HAP-1 (cell line): ENCODE measurements at regions of chr3 and their contacts with region 1.

Region 1: GRCh38 chr3:88203642-88204055 is 53.9 kb downstream of the C3orf38 start:
- DNase-seq: peak; percentile 51 to 84
- H3K4me3 ChIP-seq: no peak overlapping the region
- H3K4me1 ChIP-seq: no peaks in the 10 kb centered on the region
- H3K27me3 ChIP-seq: no peaks in the 10 kb centered on the region

Region 2: GRCh38 chr3:89107461-89108290 is 904.0 kb after region 1 on chr3 and contains the start of gene EPHA3:
- in situ Hi-C with region 1: loop called (anchors 25 kb)
- DNase-seq: peak; percentile 84 to 92
- H3K4me3 ChIP-seq: peak within 1 kb of the TSS; percentile 45
- H3K4me1 ChIP-seq: peaks cover 37% of the 10 kb centered on the region
- H3K27me3 ChIP-seq: no peaks in the 10 kb centered on the region

Region 3: GRCh38 chr3:90184861-90185260 is 1981.2 kb after region 1 on chr3:
- in situ Hi-C with region 1: loop called (anchors 10 kb)
- DNase-seq: no peak
- H3K4me3 ChIP-seq: no peak overlapping the region
- H3K4me1 ChIP-seq: no peaks in the 10 kb centered on the region
- H3K27me3 ChIP-seq: no peaks in the 10 kb centered on the region